Posterior cingulate gyrus (tissue), 11 donors: ENCODE measurements at regions of chr22 and their contacts with region 1.

Region 1: GRCh38 chr22:46317646-46318045 is 17.9 kb upstream of the TRMU start:
- DNase-seq: peak in 1 of 10 donors; percentile 61

Region 2: DNA sequence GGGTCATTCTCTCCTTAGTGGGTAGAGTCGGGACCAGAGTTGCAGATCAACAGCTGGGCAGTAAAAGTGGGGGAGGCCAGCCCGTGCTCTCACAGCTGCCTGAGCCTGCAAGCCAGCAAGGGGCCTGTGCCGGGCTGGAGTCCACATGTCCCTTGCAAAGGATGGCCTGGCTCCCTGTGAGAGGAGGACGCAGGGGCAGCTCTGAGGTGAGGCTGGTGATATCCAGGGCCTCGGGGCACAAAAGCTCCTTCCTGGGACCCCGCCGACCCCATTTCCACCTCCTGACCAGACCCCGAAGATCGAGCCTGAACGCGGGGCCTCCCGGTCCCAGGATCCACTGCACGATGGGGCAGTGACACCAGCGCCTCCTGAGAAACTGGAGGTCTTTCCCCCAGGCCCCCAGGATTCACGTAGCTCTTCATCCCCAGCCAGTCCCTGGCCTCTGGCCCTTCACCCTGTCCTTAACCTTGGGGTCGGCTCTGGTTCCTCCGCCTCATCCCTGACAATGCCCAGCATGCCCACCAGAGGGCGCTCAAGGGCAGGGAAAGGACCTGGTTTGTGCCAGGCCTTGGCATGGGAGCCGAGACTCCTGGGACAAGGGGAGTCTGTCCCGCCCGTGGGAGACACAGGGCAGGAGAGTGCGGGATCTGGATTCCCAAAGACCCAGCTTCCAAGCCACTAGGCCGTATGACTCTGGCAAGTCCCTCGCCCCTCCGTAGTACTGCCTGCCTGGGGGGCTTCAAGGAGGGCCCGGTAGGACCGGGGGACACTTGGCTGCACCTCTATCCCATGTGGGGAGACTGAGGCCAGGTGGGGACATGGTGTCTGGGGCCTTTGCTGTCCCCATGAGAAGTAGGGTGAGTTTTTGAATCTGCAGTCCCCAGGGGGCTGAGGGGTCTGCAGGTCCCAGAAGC is 322.9 kb before region 1 on chr22:
- intact Hi-C with region 1: loop called (anchors 5 kb)
- DNase-seq: peak; percentile 72 to 98 (median 90)